ENCODE measurements at regions of chr10 and their contacts with region 1.

Region 1: GRCh38 chr10:101141616-101142532 is 10.8 kb downstream of the TLX1 start:
- DNase-seq: peak in 1 of 2 experiments; percentile 93
- H3K4me3 ChIP-seq: no peak overlapping the region
- H3K27ac ChIP-seq: no peak overlapping the region
- H3K4me1 ChIP-seq: peaks cover 0 to 18% (median 9%) of the 10 kb centered on the region in 4 experiments; a peak in 5 of 7 replicates
- H3K27me3 ChIP-seq: peaks cover 97 to 100% (median 99%) of the 10 kb centered on the region in 4 experiments
- CTCF ChIP-seq: peak in 2 of 3 experiments; percentile 93 to 95; a peak in 3 of 4 replicates
- EP300 ChIP-seq: no peak
- POLR2A ChIP-seq: no peak
- RAD21 ChIP-seq: peak; percentile 84 to 90

Region 2: GRCh38 chr10:101012525-101013364 is 129.1 kb before region 1 on chr10:
- CTCF ChIA-PET with region 1: interaction called, 17 read pairs
- POLR2A ChIA-PET with region 1: no interaction called
- DNase-seq: peak in 1 of 2 experiments; percentile 88
- H3K4me3 ChIP-seq: no peak overlapping the region
- H3K27ac ChIP-seq: no peak overlapping the region
- H3K4me1 ChIP-seq: peaks cover 0 to 12% (median 7%) of the 10 kb centered on the region in 4 experiments; a peak in 4 of 7 replicates
- H3K27me3 ChIP-seq: peaks cover 5 to 20% (median 14%) of the 10 kb centered on the region in 4 experiments
- CTCF ChIP-seq: peak; percentile 76 to 99 (median 98)
- EP300 ChIP-seq: no peak
- POLR2A ChIP-seq: no peak
- RAD21 ChIP-seq: peak; percentile 55 to 68

Region 3: GRCh38 chr10:101042667-101043355 is 99.1 kb before region 1 on chr10:
- CTCF ChIA-PET with region 1: interaction called, 115 read pairs
- POLR2A ChIA-PET with region 1: interaction called, 6 read pairs
- DNase-seq: peak; percentile 90 to 97
- H3K4me3 ChIP-seq: peak overlapping the region; percentile 65 to 82 (median 73)
- H3K27ac ChIP-seq: no peak overlapping the region
- H3K4me1 ChIP-seq: peaks cover 3 to 24% (median 13%) of the 10 kb centered on the region in 4 experiments
- H3K27me3 ChIP-seq: peaks cover 20 to 42% (median 36%) of the 10 kb centered on the region in 4 experiments
- CTCF ChIP-seq: no peak
- EP300 ChIP-seq: no peak
- POLR2A ChIP-seq: no peak
- RAD21 ChIP-seq: no peak

Region 4: GRCh38 chr10:101080933-101081931 is 60.6 kb before region 1 on chr10:
- CTCF ChIA-PET with region 1: interaction called, 240 read pairs
- POLR2A ChIA-PET with region 1: no interaction called
- DNase-seq: no peak
- H3K4me3 ChIP-seq: no peak overlapping the region
- H3K27ac ChIP-seq: no peak overlapping the region
- H3K4me1 ChIP-seq: peaks cover 0 to under 1% (median under 1%) of the 10 kb centered on the region in 4 experiments; a peak in 3 of 7 replicates
- H3K27me3 ChIP-seq: peaks cover 0 to 22% (median 11%) of the 10 kb centered on the region in 4 experiments; a peak in 4 of 7 replicates
- CTCF ChIP-seq: no peak
- EP300 ChIP-seq: no peak
- POLR2A ChIP-seq: no peak
- RAD21 ChIP-seq: no peak

Region 5: DNA sequence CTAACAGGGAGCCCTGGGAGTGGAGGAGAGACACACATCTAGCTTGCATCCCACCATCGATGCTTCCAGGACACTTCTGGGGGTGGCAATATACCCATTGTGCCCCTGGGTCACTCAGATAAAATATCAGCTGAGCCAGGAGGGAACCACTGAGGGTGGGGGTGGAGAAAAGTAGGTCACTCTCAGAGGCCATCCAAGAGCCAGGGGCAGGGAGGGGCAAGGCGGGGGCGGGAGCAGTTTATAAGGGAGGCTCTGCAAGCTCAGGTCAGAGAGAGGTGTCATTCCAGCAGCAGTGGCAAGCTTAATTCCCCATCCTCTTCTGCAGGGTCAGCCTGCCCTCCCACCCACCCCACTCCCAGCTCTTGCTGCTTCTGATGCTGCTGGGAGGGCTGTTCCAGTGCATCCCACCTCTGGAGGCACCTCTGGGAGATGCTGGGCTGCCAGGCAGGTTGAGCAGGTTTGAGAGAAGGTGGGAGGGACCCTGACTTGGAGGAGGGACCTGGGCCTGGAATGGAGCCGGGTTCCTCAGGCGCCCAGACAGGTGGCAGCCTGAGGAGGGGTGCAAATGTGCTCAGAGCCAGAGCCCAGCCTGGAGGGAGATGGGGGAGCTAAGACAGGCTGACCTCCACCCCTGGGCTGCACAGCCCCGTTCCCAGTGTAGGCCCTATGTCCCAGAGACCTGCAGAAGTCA is 30.9 kb before region 1 on chr10:
- CTCF ChIA-PET with region 1: interaction called, 14 read pairs
- POLR2A ChIA-PET with region 1: no interaction called
- DNase-seq: no peak
- H3K4me3 ChIP-seq: no peak overlapping the region
- H3K27ac ChIP-seq: no peak overlapping the region
- H3K4me1 ChIP-seq: peaks cover 0 to 15% (median 4%) of the 10 kb centered on the region in 4 experiments; a peak in 6 of 7 replicates
- H3K27me3 ChIP-seq: peaks cover 0 to 6% (median 2%) of the 10 kb centered on the region in 4 experiments; a peak in 3 of 7 replicates
- CTCF ChIP-seq: no peak
- EP300 ChIP-seq: no peak
- POLR2A ChIP-seq: no peak
- RAD21 ChIP-seq: no peak

Region 6: GRCh38 chr10:101152316-101152715 is 10.4 kb after region 1 on chr10:
- CTCF ChIA-PET with region 1: interaction called, 27 read pairs
- POLR2A ChIA-PET with region 1: no interaction called
- DNase-seq: no peak
- H3K4me3 ChIP-seq: no peak overlapping the region
- H3K27ac ChIP-seq: no peak overlapping the region
- H3K4me1 ChIP-seq: no peaks in the 10 kb centered on the region
- H3K27me3 ChIP-seq: peaks cover 22 to 53% (median 43%) of the 10 kb centered on the region in 4 experiments
- CTCF ChIP-seq: no peak
- EP300 ChIP-seq: no peak
- POLR2A ChIP-seq: no peak
- RAD21 ChIP-seq: no peak

Region 7: GRCh38 chr10:101182936-101183335 is 41.1 kb after region 1 on chr10:
- CTCF ChIA-PET with region 1: no interaction called
- POLR2A ChIA-PET with region 1: no interaction called
- DNase-seq: no peak
- H3K4me3 ChIP-seq: no peak overlapping the region
- H3K27ac ChIP-seq: no peak overlapping the region
- H3K4me1 ChIP-seq: peaks cover 0 to 10% (median 9%) of the 10 kb centered on the region in 4 experiments; a peak in 6 of 7 replicates
- H3K27me3 ChIP-seq: no peaks in the 10 kb centered on the region
- CTCF ChIP-seq: no peak
- EP300 ChIP-seq: no peak
- POLR2A ChIP-seq: no peak
- RAD21 ChIP-seq: no peak

Region 8: DNA sequence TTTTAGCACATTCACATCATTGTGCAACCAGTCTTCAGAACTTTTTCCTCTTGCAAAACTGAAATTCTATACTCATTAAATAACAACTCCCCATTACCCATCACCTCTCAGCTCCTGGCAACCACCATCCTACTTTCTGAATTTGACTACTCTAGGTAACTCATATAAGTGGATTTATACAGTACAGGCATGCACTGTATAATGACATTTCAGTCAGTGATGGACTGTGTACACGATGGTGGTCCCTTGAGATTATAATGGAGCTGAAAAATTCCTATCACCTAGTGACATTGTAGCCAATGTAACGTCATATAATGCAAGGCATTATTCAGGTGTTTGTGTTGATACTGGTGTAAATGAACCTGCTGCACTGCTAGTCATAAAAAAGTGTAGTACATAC is 272.2 kb after region 1 on chr10:
- CTCF ChIA-PET with region 1: no interaction called
- POLR2A ChIA-PET with region 1: no interaction called
- DNase-seq: no peak
- H3K4me3 ChIP-seq: no peak overlapping the region
- H3K27ac ChIP-seq: no peak overlapping the region
- H3K4me1 ChIP-seq: no peaks in the 10 kb centered on the region
- H3K27me3 ChIP-seq: no peaks in the 10 kb centered on the region
- CTCF ChIP-seq: no peak
- EP300 ChIP-seq: no peak
- POLR2A ChIP-seq: no peak
- RAD21 ChIP-seq: no peak